Activated CD4-positive, alpha-beta T cell treated with anti-CD3 and anti-CD28 coated beads for 36 hours (primary cell): ENCODE measurements at regions of chr18 and their contacts with region 1.

Region 1: DNA sequence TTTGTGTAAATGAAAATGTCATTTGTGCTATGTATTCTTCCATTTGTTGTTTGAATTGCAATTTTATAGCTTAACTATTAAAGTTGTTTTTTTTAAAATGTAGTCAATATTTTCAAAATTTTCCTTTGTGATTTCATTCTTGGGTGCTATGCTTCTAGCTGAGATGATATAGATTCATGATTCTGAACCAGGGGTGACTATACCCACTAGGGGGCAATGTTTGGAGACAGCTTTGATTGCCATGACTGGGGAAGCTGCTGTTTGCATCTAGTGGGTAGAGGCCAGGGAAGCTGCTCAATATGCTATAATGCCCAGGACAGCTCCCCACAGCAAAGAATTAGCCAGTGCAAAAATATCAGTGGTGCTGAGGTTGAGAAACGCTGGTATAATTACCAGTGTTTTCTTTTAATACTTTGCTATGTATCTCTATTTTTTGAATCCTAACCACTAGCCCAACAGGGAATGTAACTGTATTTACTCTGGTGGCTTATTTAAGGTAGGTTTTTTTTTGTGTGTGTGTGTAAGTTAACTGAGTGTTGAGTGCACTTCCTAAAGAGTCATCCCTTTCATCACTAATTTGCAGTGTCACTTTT is 99.7 kb downstream of the MEP1B start:
- DNase-seq: peak; percentile 56
- ATAC-seq: peak; percentile 58
- H3K4me3 Mint-ChIP-seq: no peak overlapping the region
- H3K27ac Mint-ChIP-seq: no peak overlapping the region
- H3K4me1 Mint-ChIP-seq: no peaks in the 10 kb centered on the region
- H3K27me3 Mint-ChIP-seq: peaks cover 11% of the 10 kb centered on the region

Region 2: DNA sequence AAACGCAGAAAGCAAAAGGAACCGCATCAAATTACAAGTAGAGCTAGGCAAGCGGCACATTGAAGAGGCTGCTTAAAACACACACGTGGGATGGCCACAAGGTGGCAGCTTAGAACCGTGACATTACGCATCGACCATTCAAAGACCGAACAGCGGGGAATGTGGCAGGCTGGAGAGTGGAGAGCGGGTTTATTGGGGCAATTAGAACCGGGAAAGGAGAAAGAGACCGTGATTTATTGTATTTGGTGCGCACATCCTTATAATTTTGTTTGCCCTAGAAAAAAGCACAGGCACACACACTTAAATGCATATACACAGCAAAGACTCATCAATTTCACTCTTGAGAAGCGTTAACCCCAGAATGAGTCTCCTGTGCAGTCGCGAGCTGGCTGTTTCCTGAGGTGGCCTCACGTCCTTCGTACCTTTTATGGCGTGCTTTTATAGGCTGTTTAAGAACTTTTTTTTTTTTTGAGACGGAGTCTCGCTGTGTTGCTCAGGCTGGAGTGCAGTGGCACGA is 131.4 kb before region 1 on chr18:
- CTCF ChIA-PET with region 1: interaction called, 16 read pairs
- POLR2A ChIA-PET with region 1: no interaction called
- intact Hi-C with region 1: loop called in 1 of 2 experiments (anchors 5 kb)
- DNase-seq: peak; percentile 82
- ATAC-seq: peak; percentile 92
- H3K4me3 Mint-ChIP-seq: peak overlapping the region; percentile 54
- H3K27ac Mint-ChIP-seq: no peak overlapping the region
- H3K4me1 Mint-ChIP-seq: peaks cover 4% of the 10 kb centered on the region
- H3K27me3 Mint-ChIP-seq: peaks cover 7% of the 10 kb centered on the region

Region 3: DNA sequence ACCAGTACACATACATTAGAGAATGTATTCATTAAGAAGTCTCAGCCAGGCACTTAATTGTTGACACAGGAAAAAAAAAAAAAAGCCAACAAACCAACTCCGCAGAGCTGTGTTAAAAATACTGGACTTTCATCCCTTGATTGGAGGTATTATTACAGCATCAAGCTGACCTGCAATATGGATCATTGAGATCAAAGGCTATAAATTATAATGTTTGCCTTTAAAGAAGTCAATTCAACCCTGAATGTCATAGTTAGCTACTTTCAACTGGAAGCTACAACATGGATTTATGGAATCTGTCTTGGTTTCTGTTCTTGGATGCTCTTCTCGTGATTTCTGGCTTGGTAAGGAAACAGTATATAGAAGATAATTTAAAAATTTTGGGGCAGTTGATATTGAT is 99.8 kb before region 1 on chr18 and contains the start of gene MEP1B:
- CTCF ChIA-PET with region 1: no interaction called
- POLR2A ChIA-PET with region 1: no interaction called
- intact Hi-C with region 1: no loop called
- DNase-seq: no peak
- ATAC-seq: no peak
- H3K4me3 Mint-ChIP-seq: no peak within 1 kb of the TSS
- H3K27ac Mint-ChIP-seq: no peak within 1 kb of the TSS
- H3K4me1 Mint-ChIP-seq: no peaks in the 10 kb centered on the region
- H3K27me3 Mint-ChIP-seq: peaks cover 6% of the 10 kb centered on the region
- total RNA-seq, gene MEP1B: not detected

Region 4: GRCh38 chr18:32243358-32243757 is 46.2 kb before region 1 on chr18:
- CTCF ChIA-PET with region 1: no interaction called
- POLR2A ChIA-PET with region 1: no interaction called
- intact Hi-C with region 1: loop called in 1 of 2 experiments (anchors 5 kb)
- DNase-seq: no peak
- ATAC-seq: no peak
- H3K4me3 Mint-ChIP-seq: no peak overlapping the region
- H3K27ac Mint-ChIP-seq: no peak overlapping the region
- H3K4me1 Mint-ChIP-seq: no peaks in the 10 kb centered on the region
- H3K27me3 Mint-ChIP-seq: peaks cover 9% of the 10 kb centered on the region

Region 5: GRCh38 chr18:32276906-32277305 is 12.7 kb before region 1 on chr18:
- CTCF ChIA-PET with region 1: interaction called, 10 read pairs
- POLR2A ChIA-PET with region 1: no interaction called
- intact Hi-C with region 1: no loop called
- DNase-seq: no peak
- ATAC-seq: no peak
- H3K4me3 Mint-ChIP-seq: no peak overlapping the region
- H3K27ac Mint-ChIP-seq: no peak overlapping the region
- H3K4me1 Mint-ChIP-seq: no peaks in the 10 kb centered on the region
- H3K27me3 Mint-ChIP-seq: peaks cover 10% of the 10 kb centered on the region

Region 6: GRCh38 chr18:32389858-32390257 is 100.3 kb after region 1 on chr18:
- CTCF ChIA-PET with region 1: no interaction called
- POLR2A ChIA-PET with region 1: no interaction called
- intact Hi-C with region 1: no loop called
- DNase-seq: no peak
- ATAC-seq: no peak
- H3K4me3 Mint-ChIP-seq: no peak overlapping the region
- H3K27ac Mint-ChIP-seq: no peak overlapping the region
- H3K4me1 Mint-ChIP-seq: no peaks in the 10 kb centered on the region
- H3K27me3 Mint-ChIP-seq: peaks cover 16% of the 10 kb centered on the region